PC-9 (cell line): ENCODE measurements at regions of chr3 and their contacts with region 1.

Region 1: GRCh38 chr3:58994746-58995330 is 55.0 kb downstream of the CFAP20DC start:
- DNase-seq: peak in 1 of 2 experiments; percentile 35
- H3K4me3 ChIP-seq: no peak overlapping the region
- H3K27ac ChIP-seq: no peak overlapping the region
- H3K4me1 ChIP-seq: peaks cover 16% of the 10 kb centered on the region
- H3K27me3 ChIP-seq: no peaks in the 10 kb centered on the region
- CTCF ChIP-seq: peak; percentile 78

Region 2: DNA sequence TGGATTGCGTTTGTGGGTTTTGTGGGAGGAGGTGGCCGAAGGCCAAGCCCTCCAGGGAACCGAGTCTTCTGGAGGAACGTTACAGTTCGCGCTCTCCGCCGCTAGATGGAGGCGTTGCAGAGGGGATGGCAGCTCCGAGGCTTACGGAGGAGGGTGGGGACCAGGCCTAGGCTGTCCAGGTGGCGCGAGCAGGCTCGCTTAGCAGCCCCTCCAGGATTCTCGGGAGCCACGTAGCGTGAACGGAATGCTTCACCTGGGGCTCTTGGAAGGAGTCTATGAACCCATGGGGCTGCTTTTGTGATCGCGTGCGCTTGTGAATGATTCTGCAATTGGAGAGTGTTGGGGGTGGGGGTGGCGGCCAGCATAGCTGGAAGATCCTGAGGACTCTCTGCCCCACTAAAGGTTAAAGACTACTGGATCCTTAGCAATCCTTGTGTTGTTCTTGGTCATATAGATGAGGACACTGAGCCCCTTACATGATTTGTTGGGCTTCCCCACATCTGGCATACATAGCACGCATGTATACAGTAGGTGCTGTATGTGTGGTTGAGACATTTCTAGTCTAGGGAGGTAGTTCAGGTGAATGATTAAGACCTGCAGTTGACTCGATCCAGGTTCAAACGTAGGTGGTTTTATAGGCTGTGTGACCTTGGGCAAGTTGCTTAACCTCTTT is 354.0 kb before region 1 on chr3:
- CTCF ChIA-PET with region 1: no interaction called
- POLR2A ChIA-PET with region 1: no interaction called
- intact Hi-C with region 1: loop called (anchors 5 kb)
- DNase-seq: peak; percentile 69 to 81
- H3K4me3 ChIP-seq: no peak overlapping the region
- H3K27ac ChIP-seq: no peak overlapping the region
- H3K4me1 ChIP-seq: no peaks in the 10 kb centered on the region
- H3K27me3 ChIP-seq: no peaks in the 10 kb centered on the region
- CTCF ChIP-seq: peak; percentile 88

Region 3: GRCh38 chr3:59212128-59212779 is 217.4 kb after region 1 on chr3:
- CTCF ChIA-PET with region 1: no interaction called
- POLR2A ChIA-PET with region 1: no interaction called
- intact Hi-C with region 1: loop called (anchors 2 kb)
- DNase-seq: peak in 1 of 2 experiments; percentile 46
- H3K4me3 ChIP-seq: no peak overlapping the region
- H3K27ac ChIP-seq: no peak overlapping the region
- H3K4me1 ChIP-seq: no peaks in the 10 kb centered on the region
- H3K27me3 ChIP-seq: no peaks in the 10 kb centered on the region
- CTCF ChIP-seq: peak; percentile 80

Region 4: GRCh38 chr3:59803268-59803667 is 808.4 kb after region 1 on chr3:
- CTCF ChIA-PET with region 1: interaction called, 11 read pairs
- POLR2A ChIA-PET with region 1: no interaction called
- intact Hi-C with region 1: no loop called
- DNase-seq: no peak
- H3K4me3 ChIP-seq: no peak overlapping the region
- H3K27ac ChIP-seq: no peak overlapping the region
- H3K4me1 ChIP-seq: no peaks in the 10 kb centered on the region
- H3K27me3 ChIP-seq: no peaks in the 10 kb centered on the region
- CTCF ChIP-seq: no peak

Region 5: GRCh38 chr3:59908280-59908679 is 913.4 kb after region 1 on chr3:
- CTCF ChIA-PET with region 1: no interaction called
- POLR2A ChIA-PET with region 1: no interaction called
- intact Hi-C with region 1: no loop called
- DNase-seq: no peak
- H3K4me3 ChIP-seq: no peak overlapping the region
- H3K27ac ChIP-seq: no peak overlapping the region
- H3K4me1 ChIP-seq: no peaks in the 10 kb centered on the region
- H3K27me3 ChIP-seq: no peaks in the 10 kb centered on the region
- CTCF ChIP-seq: no peak